ENCODE measurements at regions of chr10 and their contacts with region 1.

Region 1: DNA sequence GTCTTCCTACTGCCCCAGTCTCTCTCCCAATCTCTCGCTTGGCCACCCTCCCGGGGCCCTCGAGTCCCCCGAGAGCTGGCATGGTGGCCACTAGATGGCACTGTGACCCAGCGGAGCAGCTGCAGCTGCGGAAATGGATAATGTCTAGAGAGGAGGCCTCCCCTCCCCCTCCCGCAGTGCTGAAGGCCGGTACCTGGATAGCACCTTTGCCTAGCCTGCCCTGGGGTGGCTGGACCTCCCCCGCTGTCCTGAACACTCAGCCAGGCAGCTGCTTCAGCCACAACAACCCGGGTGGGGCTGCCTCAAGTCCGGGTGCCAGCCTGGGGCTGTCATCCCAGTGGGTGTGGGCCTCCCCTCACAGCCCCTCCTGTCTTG is 65.2 kb downstream of the GOLGA7B start:
- DNase-seq: peak; percentile 48
- H3K4me3 ChIP-seq: no peak overlapping the region
- H3K27ac ChIP-seq: no peak overlapping the region
- H3K4me1 ChIP-seq: no peaks in the 10 kb centered on the region
- H3K27me3 ChIP-seq: peaks cover 7% of the 10 kb centered on the region
- CTCF ChIP-seq: peak; percentile 75 to 95

Region 2: GRCh38 chr10:98039690-98040366 is 125.0 kb after region 1 on chr10:
- CTCF ChIA-PET with region 1: interaction called, 42 read pairs
- dilution Hi-C with region 1: no loop called
- in situ Hi-C with region 1: loop called (anchors 5 kb)
- intact Hi-C with region 1: loop called (anchors 1 kb)
- DNase-seq: no peak
- H3K4me3 ChIP-seq: no peak overlapping the region
- H3K27ac ChIP-seq: no peak overlapping the region
- H3K4me1 ChIP-seq: no peaks in the 10 kb centered on the region
- H3K27me3 ChIP-seq: no peaks in the 10 kb centered on the region
- CTCF ChIP-seq: no peak

Region 3: GRCh38 chr10:98045785-98046389 is 131.1 kb after region 1 on chr10:
- CTCF ChIA-PET with region 1: interaction called, 42 read pairs
- dilution Hi-C with region 1: no loop called
- in situ Hi-C with region 1: loop called (anchors 5 kb)
- intact Hi-C with region 1: loop called (anchors 1 kb)
- DNase-seq: peak; percentile 53
- H3K4me3 ChIP-seq: no peak overlapping the region
- H3K27ac ChIP-seq: no peak overlapping the region
- H3K4me1 ChIP-seq: no peaks in the 10 kb centered on the region
- H3K27me3 ChIP-seq: no peaks in the 10 kb centered on the region
- CTCF ChIP-seq: peak; percentile 90 to 95

Region 4: GRCh38 chr10:98170249-98171117 is 255.7 kb after region 1 on chr10:
- CTCF ChIA-PET with region 1: no interaction called
- dilution Hi-C with region 1: no loop called
- in situ Hi-C with region 1: no loop called
- intact Hi-C with region 1: loop called (anchors 2 kb)
- DNase-seq: peak; percentile 50
- H3K4me3 ChIP-seq: no peak overlapping the region
- H3K27ac ChIP-seq: no peak overlapping the region
- H3K4me1 ChIP-seq: no peaks in the 10 kb centered on the region
- H3K27me3 ChIP-seq: no peaks in the 10 kb centered on the region
- CTCF ChIP-seq: peak; percentile 79 to 83

Region 5: GRCh38 chr10:98331885-98332284 is 417.1 kb after region 1 on chr10:
- CTCF ChIA-PET with region 1: no interaction called
- dilution Hi-C with region 1: no loop called
- in situ Hi-C with region 1: no loop called
- intact Hi-C with region 1: loop called (anchors 1 kb)
- DNase-seq: peak; percentile 17
- H3K4me3 ChIP-seq: no peak overlapping the region
- H3K27ac ChIP-seq: no peak overlapping the region
- H3K4me1 ChIP-seq: no peaks in the 10 kb centered on the region
- H3K27me3 ChIP-seq: no peaks in the 10 kb centered on the region
- CTCF ChIP-seq: peak; percentile 58 to 79

Measured in mammary epithelial cell (primary cell).